ENCODE measurements at regions of chr2 and their contacts with region 1.

Region 1: DNA sequence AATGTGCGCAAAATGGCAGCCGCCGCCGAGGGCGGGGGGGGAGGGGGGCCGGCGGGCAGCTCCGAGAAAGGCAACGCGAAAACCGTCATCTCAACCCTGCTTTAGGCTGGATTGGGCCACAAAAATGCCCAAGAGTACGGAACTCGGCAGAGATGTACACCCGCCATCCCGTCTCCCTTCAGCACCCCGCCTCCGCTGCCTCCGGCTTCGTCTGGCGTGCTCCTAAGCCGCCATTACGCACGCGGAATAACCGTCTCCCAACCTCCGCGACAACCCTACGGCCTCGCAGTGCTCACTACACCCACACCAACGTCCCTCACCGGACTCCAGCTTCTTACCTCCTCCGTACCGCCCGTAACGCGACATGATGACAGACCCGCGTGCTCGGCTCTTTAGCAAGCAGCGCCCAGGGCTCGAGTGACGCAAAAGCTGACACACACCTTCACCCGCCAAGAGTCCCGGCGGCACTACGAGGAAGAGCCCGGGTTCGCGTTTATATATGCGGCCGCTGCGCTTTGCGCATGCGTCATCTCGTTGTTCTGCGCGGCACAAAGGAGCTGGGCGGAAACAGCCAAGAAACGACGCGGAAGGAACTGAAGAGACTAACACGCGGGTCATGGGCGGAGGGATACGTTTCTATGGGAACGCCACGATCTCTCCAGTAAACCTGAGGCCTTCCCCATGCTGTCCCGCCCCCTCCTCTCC is at the start of gene SRSF7:
- DNase-seq: peak; percentile 98
- H3K4me3 ChIP-seq: peak within 1 kb of the TSS; percentile 92 to 94
- H3K27ac ChIP-seq: peak within 1 kb of the TSS; percentile 92 to 100
- H3K4me1 ChIP-seq: peaks cover 41 to 43% of the 10 kb centered on the region in 2 experiments
- H3K27me3 ChIP-seq: no peaks in the 10 kb centered on the region
- CTCF ChIP-seq: no peak
- EP300 ChIP-seq: peak; percentile 30 to 38; a peak in 3 of 4 replicates
- RAD21 ChIP-seq: no peak
- polyA plus RNA-seq, gene SRSF7: 199 and 212 TPM in 2 replicates

Region 2: GRCh38 chr2:38602732-38603401 is 148.2 kb before region 1 on chr2 and contains the start of gene HNRNPLL:
- CTCF ChIA-PET with region 1: interaction called, 5 read pairs
- POLR2A ChIA-PET with region 1: interaction called, 65 read pairs
- DNase-seq: peak; percentile 100
- H3K4me3 ChIP-seq: peak within 1 kb of the TSS; percentile 90 to 94
- H3K27ac ChIP-seq: peak within 1 kb of the TSS; percentile 92 to 96
- H3K4me1 ChIP-seq: peaks cover 9 to 19% of the 10 kb centered on the region in 2 experiments
- H3K27me3 ChIP-seq: no peaks in the 10 kb centered on the region
- CTCF ChIP-seq: peak; percentile 19
- EP300 ChIP-seq: peak; percentile 6 to 31; a peak in 1 of 4 replicates
- RAD21 ChIP-seq: no peak
- polyA plus RNA-seq, gene HNRNPLL: 24.4 and 29.8 TPM in 2 replicates

Region 3: DNA sequence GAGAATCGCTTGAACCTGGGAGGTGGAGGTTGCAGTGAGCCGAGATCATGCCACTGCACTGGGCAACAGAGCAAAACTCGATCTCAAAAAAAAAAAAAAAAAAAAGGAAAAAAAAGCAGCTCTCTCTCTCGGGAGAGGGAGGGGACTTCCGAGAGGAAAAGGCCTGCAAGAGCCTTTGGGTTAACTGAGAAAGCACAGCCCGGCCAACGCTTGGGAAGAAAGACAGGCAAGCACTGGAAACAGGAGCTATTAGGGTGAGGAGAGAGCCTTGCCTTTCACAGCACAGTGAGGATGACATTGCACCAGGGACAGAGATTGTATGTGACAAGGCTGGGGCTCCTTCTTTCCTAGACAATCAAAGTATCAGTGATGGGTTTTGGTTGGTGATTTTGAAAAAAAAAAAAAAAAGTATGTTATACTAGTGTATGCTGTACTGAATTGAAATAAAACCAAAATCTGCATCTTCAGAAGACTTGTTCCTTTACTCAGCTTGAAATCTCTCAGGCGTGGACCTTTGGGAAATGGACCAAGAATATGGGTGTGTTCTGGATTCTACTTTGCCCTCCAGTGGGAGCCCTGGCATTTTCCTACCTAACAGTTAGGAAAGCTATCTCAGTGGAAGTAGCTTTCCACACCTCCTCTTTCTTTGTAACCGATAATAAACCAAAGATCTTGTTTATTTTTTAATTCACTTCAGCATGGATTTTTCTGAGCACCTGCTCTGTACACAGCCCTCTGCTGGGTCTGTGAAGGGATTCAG is 16.6 kb before region 1 on chr2:
- CTCF ChIA-PET with region 1: interaction called, 7 read pairs
- POLR2A ChIA-PET with region 1: interaction called, 17 read pairs
- DNase-seq: no peak
- H3K4me3 ChIP-seq: no peak overlapping the region
- H3K27ac ChIP-seq: no peak overlapping the region
- H3K4me1 ChIP-seq: no peaks in the 10 kb centered on the region; a peak in 1 of 4 replicates
- H3K27me3 ChIP-seq: no peaks in the 10 kb centered on the region
- CTCF ChIP-seq: no peak
- EP300 ChIP-seq: no peak
- RAD21 ChIP-seq: no peak

Region 4: DNA sequence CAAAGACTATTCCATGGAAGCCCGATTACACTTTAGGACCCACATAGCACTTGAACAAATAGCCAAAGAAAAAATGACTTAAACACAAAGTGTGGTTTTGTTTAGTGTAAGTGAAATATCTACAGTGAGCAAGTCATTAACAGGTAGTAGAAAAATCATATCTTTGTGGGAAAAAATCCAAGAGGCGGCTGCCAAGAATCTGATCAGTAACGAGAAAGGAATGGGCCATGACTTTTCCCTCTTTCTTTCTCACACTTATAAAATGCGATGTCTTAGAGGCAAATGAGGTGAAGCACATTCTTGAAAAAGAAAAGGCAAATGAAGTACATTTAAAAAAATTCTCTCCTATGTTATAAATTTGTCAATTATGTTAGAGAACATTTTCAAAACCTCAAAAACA is 14.1 kb after region 1 on chr2:
- CTCF ChIA-PET with region 1: interaction called, 3 read pairs
- POLR2A ChIA-PET with region 1: interaction called, 36 read pairs
- DNase-seq: no peak
- H3K4me3 ChIP-seq: no peak overlapping the region
- H3K27ac ChIP-seq: peak overlapping the region in 1 of 2 experiments; percentile 53; a peak in 2 of 4 replicates
- H3K4me1 ChIP-seq: 0 out of 4 replicates have a peak, but pooled peaks cover 0 to 4% of the 10 kb centered on the region in 2 experiments
- H3K27me3 ChIP-seq: no peaks in the 10 kb centered on the region
- CTCF ChIP-seq: no peak
- EP300 ChIP-seq: no peak
- RAD21 ChIP-seq: no peak

Region 5: GRCh38 chr2:38771632-38772031 is 20.6 kb after region 1 on chr2:
- CTCF ChIA-PET with region 1: interaction called, 3 read pairs
- POLR2A ChIA-PET with region 1: interaction called, 36 read pairs
- DNase-seq: no peak
- H3K4me3 ChIP-seq: no peak overlapping the region
- H3K27ac ChIP-seq: no peak overlapping the region
- H3K4me1 ChIP-seq: peaks cover 0 to 2% of the 10 kb centered on the region in 2 experiments; a peak in 2 of 4 replicates
- H3K27me3 ChIP-seq: no peaks in the 10 kb centered on the region
- CTCF ChIP-seq: no peak
- EP300 ChIP-seq: no peak
- RAD21 ChIP-seq: no peak

Region 6: GRCh38 chr2:38778687-38779082 is 27.6 kb after region 1 on chr2:
- CTCF ChIA-PET with region 1: interaction called, 3 read pairs
- POLR2A ChIA-PET with region 1: interaction called, 30 read pairs
- DNase-seq: peak; percentile 61
- H3K4me3 ChIP-seq: peak overlapping the region; percentile 71 to 80
- H3K27ac ChIP-seq: peak overlapping the region; percentile 57 to 81
- H3K4me1 ChIP-seq: peaks cover 3 to 7% of the 10 kb centered on the region in 2 experiments; a peak in 1 of 4 replicates
- H3K27me3 ChIP-seq: no peaks in the 10 kb centered on the region
- CTCF ChIP-seq: no peak
- EP300 ChIP-seq: no peak
- RAD21 ChIP-seq: no peak

Region 7: GRCh38 chr2:38863378-38863695 is 112.3 kb after region 1 on chr2:
- CTCF ChIA-PET with region 1: no interaction called
- POLR2A ChIA-PET with region 1: no interaction called
- DNase-seq: no peak
- H3K4me3 ChIP-seq: no peak overlapping the region
- H3K27ac ChIP-seq: no peak overlapping the region
- H3K4me1 ChIP-seq: no peaks in the 10 kb centered on the region
- H3K27me3 ChIP-seq: no peaks in the 10 kb centered on the region
- CTCF ChIP-seq: no peak
- EP300 ChIP-seq: no peak
- RAD21 ChIP-seq: no peak

Region 8: GRCh38 chr2:38875576-38876367 is 124.7 kb after region 1 on chr2 and contains the starts of genes DHX57 and MORN2:
- CTCF ChIA-PET with region 1: no interaction called
- POLR2A ChIA-PET with region 1: interaction called, 14 read pairs
- DNase-seq: peak; percentile 96
- H3K4me3 ChIP-seq: peak within 1 kb of the TSS; percentile 78 to 95
- H3K27ac ChIP-seq: peak within 1 kb of the TSS; percentile 62 to 81
- H3K4me1 ChIP-seq: peaks cover 0 to 7% of the 10 kb centered on the region in 2 experiments; a peak in 2 of 4 replicates
- H3K27me3 ChIP-seq: no peaks in the 10 kb centered on the region
- CTCF ChIP-seq: no peak
- EP300 ChIP-seq: no peak
- RAD21 ChIP-seq: no peak
- polyA plus RNA-seq, gene DHX57: 12.3 and 13.8 TPM in 2 replicates
- polyA plus RNA-seq, gene MORN2: 23.2 and 23.7 TPM in 2 replicates

Region 9: GRCh38 chr2:39094852-39095306 is 343.8 kb after region 1 on chr2:
- CTCF ChIA-PET with region 1: no interaction called
- POLR2A ChIA-PET with region 1: no interaction called
- DNase-seq: no peak
- H3K4me3 ChIP-seq: no peak overlapping the region
- H3K27ac ChIP-seq: no peak overlapping the region
- H3K4me1 ChIP-seq: peaks cover 5 to 8% of the 10 kb centered on the region in 2 experiments
- H3K27me3 ChIP-seq: no peaks in the 10 kb centered on the region
- CTCF ChIP-seq: no peak
- EP300 ChIP-seq: no peak
- RAD21 ChIP-seq: no peak

Region 10: DNA sequence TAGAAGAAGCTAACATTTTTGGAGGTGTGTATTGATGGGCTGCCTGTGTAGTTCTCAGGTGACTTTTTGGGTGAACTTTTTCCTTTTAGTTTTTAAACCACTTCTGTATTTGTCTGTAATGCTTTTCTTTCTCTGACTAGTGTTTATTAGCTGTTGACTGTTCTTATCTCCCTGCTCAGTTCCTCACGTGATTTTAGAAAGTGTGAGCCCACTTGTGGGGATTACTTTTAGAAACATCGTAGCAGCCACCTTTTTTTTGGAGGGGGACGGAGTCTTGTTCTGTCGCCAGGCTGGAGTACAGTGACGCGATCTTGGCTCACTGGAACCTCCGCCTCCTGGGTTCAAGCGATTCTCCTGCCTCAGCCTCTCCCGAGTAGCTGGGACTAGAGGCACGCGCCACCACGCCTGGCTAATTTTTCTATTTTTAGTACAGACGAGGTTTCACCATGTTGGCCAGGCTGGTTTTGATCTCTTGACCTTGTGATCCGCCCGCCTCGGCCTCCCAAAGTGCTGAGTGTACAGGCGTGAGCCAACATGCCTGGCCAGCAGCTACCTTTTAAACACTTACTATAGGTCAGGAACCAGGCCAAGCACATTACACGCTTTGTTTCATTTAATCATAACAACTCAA is 502.0 kb after region 1 on chr2:
- CTCF ChIA-PET with region 1: no interaction called
- POLR2A ChIA-PET with region 1: no interaction called
- DNase-seq: no peak
- H3K4me3 ChIP-seq: no peak overlapping the region
- H3K27ac ChIP-seq: no peak overlapping the region
- H3K4me1 ChIP-seq: no peaks in the 10 kb centered on the region
- H3K27me3 ChIP-seq: no peaks in the 10 kb centered on the region
- CTCF ChIP-seq: no peak
- EP300 ChIP-seq: no peak
- RAD21 ChIP-seq: no peak

Measured in SK-N-SH (cell line).